ENCODE measurements at regions of chr17 and their contacts with region 1.

Region 1: GRCh38 chr17:72725433-72726068 is 366.9 kb downstream of the SLC39A11 start:
- H3K4me3 ChIP-seq: no peak overlapping the region
- H3K27ac ChIP-seq: no peak overlapping the region
- H3K4me1 ChIP-seq: no peaks in the 10 kb centered on the region
- CTCF ChIP-seq: peak; percentile 81

Region 2: DNA sequence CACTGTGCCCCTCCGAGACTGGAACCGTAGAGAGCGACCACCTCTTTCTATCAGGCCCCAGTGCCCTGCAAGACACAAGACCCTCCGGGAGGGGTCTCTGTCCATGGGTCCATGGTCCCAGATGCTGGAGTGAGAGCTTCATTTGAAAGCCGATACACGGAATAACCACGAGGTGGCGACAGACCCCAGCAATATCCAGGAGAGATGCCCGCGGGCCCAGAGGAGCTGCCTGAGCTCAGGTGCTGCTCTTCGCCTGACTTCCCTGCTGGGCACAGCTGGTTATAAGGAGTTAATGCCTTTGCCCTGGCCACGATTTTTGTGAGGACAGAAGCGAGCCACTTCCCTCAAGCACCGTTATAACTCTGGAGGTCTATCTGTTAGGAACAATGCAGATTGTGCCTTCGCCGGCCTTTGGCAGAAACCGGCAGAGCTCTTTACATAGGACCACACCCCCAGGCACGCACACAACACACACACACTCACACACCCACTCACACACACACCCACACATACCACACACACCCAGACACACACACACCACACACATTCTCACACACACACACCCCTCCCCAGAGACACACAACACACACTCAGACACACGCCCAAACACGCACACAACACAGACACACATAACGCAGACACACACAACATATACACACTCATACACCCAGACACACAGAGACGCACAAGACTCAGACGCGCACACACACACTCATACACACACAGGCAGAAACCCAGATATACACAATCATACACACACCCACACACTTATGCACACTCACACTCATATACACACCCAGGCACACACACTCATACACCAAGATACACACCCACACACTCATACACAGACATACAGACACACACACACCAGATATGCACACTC is 168.4 kb before region 1 on chr17:
- CTCF ChIA-PET with region 1: interaction called, 301 read pairs
- POLR2A ChIA-PET with region 1: interaction called, 5 read pairs
- H3K4me3 ChIP-seq: no peak overlapping the region
- H3K27ac ChIP-seq: no peak overlapping the region
- H3K4me1 ChIP-seq: no peaks in the 10 kb centered on the region
- CTCF ChIP-seq: peak; percentile 75

Region 3: DNA sequence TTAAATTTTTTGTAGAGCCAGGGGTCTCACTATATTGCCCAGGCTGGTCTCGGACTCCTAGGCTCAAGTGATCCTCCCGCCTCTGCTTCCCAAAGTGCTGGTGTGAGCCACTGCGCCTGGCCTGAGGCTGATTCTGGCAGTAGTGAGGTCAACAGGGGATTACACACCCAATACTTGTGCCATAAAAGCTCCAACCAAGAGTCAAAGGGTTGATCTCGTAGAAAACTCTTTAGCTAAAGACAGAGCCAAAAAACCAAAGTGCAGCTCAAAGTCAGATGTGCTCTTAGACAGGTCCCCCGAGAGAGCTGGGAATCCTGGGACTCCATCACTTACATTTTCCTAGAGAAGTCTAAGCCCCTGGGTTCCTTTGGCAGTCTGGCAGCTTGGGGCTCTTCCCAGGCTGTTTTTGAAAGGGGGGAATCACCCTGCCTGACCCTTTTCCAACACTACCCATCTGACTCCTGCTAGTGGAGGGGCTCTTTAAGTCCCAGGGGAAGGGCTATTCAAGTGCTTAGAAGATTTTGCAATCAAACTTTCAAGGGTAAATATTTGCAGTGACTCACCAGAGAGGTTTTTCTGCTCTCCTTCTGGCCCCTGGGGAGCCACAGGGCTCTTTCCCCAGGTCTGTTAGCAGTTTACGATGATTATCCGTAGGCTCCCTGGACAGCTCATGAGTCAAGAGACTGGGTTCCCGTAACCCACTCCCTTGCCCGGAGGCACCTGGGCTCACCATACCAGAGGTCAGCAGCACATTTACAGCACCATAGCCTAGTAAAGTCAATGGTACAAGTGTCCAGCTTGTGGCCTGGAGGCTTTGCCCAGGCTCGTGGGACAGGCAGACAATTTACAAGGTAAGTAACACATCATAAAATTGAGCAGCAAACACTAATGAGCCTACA is 41.8 kb before region 1 on chr17:
- CTCF ChIA-PET with region 1: interaction called, 22 read pairs
- POLR2A ChIA-PET with region 1: interaction called, 4 read pairs
- H3K4me3 ChIP-seq: no peak overlapping the region
- H3K27ac ChIP-seq: peak overlapping the region; percentile 86
- H3K4me1 ChIP-seq: peaks cover 26% of the 10 kb centered on the region
- CTCF ChIP-seq: no peak

Region 4: DNA sequence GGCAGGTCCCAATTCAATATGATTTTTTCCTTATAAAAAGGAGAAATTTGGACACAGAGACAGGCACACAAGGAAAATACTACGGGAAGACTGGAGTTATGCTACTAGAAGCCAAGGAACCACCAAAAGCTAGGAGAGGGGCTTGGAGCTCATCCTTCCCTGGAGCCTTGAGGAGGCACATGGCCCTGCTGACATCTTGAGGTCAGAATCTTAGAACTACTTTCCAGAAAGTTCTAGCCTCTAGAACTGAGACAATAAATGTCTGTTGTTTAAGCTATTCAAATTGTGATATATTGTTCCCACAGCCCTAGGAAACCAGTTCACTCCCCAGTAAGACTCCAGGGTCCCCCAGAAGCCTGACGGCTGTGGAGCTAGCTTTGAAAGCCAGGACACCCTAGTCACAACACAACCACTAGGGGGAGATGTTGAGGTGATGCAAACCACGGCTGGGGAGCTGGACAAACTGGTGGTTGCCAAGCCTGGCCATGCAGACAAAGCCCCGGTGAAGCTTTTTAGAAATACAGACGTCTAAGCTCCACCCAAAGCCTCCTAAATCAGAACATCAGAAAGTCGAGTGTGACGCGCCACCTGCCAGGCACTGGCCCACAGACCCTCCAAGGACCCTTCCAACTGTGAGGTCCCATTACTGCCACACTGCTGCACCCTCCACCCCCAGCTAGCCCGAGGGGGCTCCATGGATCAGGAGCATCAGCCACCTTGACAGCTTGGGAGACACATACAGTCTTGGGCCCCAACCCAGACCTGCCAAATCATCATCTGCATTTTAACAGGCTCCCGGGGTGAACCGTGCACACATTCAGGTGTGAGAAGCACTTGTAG is 260.6 kb after region 1 on chr17:
- CTCF ChIA-PET with region 1: interaction called, 42 read pairs
- POLR2A ChIA-PET with region 1: no interaction called
- H3K4me3 ChIP-seq: no peak overlapping the region
- H3K27ac ChIP-seq: no peak overlapping the region
- H3K4me1 ChIP-seq: peaks cover 6% of the 10 kb centered on the region; the same call in 1 of the 2 replicates
- CTCF ChIP-seq: no peak

Region 5: GRCh38 chr17:73179878-73180277 is 454.3 kb after region 1 on chr17:
- CTCF ChIA-PET with region 1: interaction called, 10 read pairs
- POLR2A ChIA-PET with region 1: interaction called, 4 read pairs
- H3K4me3 ChIP-seq: no peak overlapping the region
- H3K27ac ChIP-seq: no peak overlapping the region
- H3K4me1 ChIP-seq: no peaks in the 10 kb centered on the region
- CTCF ChIP-seq: no peak

Region 6: GRCh38 chr17:73231841-73232586 is 506.5 kb after region 1 on chr17:
- CTCF ChIA-PET with region 1: interaction called, 11 read pairs
- POLR2A ChIA-PET with region 1: no interaction called
- H3K4me3 ChIP-seq: peak overlapping the region; percentile 93
- H3K27ac ChIP-seq: peak overlapping the region; percentile 74
- H3K4me1 ChIP-seq: peaks cover 13% of the 10 kb centered on the region
- CTCF ChIP-seq: peak; percentile 92

Region 7: GRCh38 chr17:73255671-73256181 is 530.2 kb after region 1 on chr17:
- CTCF ChIA-PET with region 1: interaction called, 37 read pairs
- POLR2A ChIA-PET with region 1: no interaction called
- H3K4me3 ChIP-seq: no peak overlapping the region
- H3K27ac ChIP-seq: no peak overlapping the region
- H3K4me1 ChIP-seq: no peaks in the 10 kb centered on the region
- CTCF ChIP-seq: peak; percentile 90

Measured in HEK293 (cell line).